H1 (cell line): ENCODE measurements at regions of chr7 and their contacts with region 1.

Region 1: GRCh38 chr7:36937754-36938563 is 213.7 kb upstream of the AOAH start:
- DNase-seq: no peak
- H3K4me3 ChIP-seq: no peak overlapping the region
- H3K27ac ChIP-seq: no peak overlapping the region
- H3K4me1 ChIP-seq: peaks cover 0 to 3% (median 0%) of the 10 kb centered on the region in 4 experiments; a peak in 1 of 7 replicates
- H3K27me3 ChIP-seq: no peaks in the 10 kb centered on the region
- CTCF ChIP-seq: peak in 2 of 3 experiments; percentile 15 to 31; a peak in 2 of 4 replicates
- EP300 ChIP-seq: no peak
- POLR2A ChIP-seq: no peak
- RAD21 ChIP-seq: no peak; a peak in 1 of 4 replicates

Region 2: GRCh38 chr7:36911788-36912187 is 26.2 kb before region 1 on chr7:
- CTCF ChIA-PET with region 1: interaction called, 11 read pairs
- POLR2A ChIA-PET with region 1: no interaction called
- DNase-seq: no peak
- H3K4me3 ChIP-seq: no peak overlapping the region
- H3K27ac ChIP-seq: no peak overlapping the region
- H3K4me1 ChIP-seq: no peaks in the 10 kb centered on the region
- H3K27me3 ChIP-seq: no peaks in the 10 kb centered on the region
- CTCF ChIP-seq: no peak
- EP300 ChIP-seq: no peak
- POLR2A ChIP-seq: no peak
- RAD21 ChIP-seq: no peak